ENCODE measurements at regions of chr20 and their contacts with region 1.

Region 1: GRCh38 chr20:64119681-64120341 is 12.4 kb upstream of the NPBWR2 start:
- DNase-seq: no peak
- H3K4me3 Mint-ChIP-seq: peak overlapping the region; percentile 35
- H3K27ac Mint-ChIP-seq: no peak overlapping the region
- H3K4me1 Mint-ChIP-seq: peaks cover 8% of the 10 kb centered on the region
- H3K27me3 Mint-ChIP-seq: peaks cover 8% of the 10 kb centered on the region

Region 2: DNA sequence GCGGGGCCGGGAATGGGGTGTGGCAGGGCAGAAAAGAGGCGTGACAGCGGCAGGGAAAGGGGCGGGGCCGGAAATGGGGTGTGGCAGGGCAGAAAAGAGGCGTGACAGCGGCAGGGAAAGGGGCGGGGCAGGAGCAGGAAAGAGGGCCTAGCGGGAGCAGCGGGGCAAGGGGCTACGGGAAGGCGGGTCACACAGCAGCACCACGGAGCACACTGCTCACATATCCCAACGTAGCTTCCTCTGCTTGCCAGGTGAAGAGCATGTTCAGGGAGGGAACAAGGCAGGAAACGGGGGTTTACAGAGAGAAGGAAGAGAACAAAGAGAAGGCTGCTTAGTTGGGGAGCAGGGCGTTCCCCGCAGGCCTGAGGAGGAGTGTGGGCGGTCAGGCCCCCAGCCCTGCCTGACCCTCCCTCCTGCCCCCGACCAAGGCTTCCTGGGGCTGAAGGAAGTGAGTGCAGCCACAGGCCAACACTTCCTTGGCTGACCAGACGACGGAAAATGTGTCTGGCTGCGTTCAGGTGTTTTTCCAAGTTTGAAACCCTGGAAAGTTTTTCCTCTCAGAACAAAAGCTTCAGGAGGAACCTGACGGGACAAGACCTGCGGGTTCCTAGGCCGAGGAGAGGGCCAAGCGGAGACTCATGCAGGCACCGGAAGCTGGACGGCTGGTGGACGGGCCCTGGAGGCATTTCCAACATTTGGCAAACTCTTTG is 177.4 kb before region 1 on chr20:
- CTCF ChIA-PET with region 1: no interaction called
- POLR2A ChIA-PET with region 1: no interaction called
- intact Hi-C with region 1: no loop called
- DNase-seq: peak; percentile 63
- H3K4me3 Mint-ChIP-seq: no peak overlapping the region
- H3K27ac Mint-ChIP-seq: peak overlapping the region; percentile 77
- H3K4me1 Mint-ChIP-seq: peaks cover 12% of the 10 kb centered on the region
- H3K27me3 Mint-ChIP-seq: no peaks in the 10 kb centered on the region

Region 3: DNA sequence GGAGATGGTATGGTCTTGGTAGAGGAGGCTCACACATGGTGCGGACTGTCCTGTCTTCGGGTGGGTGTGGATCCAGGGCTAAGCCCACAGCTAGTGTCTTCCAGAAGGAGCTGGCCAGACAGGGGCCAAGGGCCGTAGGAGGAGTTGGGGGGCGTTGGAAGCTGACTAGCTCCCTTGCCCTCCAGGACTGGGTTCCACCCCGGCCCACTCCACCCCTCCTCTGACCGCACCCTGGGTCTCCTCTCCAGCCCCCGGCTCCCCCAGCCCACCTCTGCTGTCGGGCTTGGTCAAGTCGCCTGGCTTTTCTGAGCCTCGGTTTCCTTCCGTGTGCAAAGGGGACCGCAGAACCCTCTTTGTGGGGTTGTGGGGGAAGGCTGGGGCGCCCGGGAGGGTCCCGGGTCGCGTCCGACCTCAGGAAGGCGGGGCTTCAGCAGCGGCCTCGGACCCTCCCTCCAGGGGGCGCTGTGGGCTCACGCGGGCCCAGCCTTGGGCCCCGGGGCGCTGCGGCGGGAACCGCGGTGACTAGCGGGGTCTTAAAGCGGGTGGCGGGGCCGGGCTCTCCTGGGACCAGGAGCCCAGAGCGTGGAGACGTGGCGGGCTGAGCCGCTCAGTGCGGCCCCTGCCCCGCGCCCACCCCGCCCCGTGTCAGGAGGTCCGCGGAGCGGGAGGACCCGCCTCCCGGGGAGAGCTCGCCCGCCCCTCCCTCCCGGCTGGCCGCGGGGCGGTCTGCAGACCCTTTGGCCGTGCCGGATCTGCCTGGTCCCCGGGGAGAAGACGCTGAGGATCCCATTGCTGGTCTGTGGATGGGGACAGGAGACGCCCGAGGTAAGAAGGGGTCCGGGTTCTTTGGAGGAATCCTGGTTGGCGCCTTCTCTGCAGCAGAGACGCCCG is 17.8 kb before region 1 on chr20:
- CTCF ChIA-PET with region 1: interaction called, 33 read pairs
- POLR2A ChIA-PET with region 1: no interaction called
- intact Hi-C with region 1: loop called (anchors 1 kb)
- DNase-seq: peak; percentile 76
- H3K4me3 Mint-ChIP-seq: peak overlapping the region; percentile 10
- H3K27ac Mint-ChIP-seq: no peak overlapping the region
- H3K4me1 Mint-ChIP-seq: peaks cover 7% of the 10 kb centered on the region
- H3K27me3 Mint-ChIP-seq: peaks cover 20% of the 10 kb centered on the region